ENCODE measurements at regions of chr12 and their contacts with region 1.

Region 1: DNA sequence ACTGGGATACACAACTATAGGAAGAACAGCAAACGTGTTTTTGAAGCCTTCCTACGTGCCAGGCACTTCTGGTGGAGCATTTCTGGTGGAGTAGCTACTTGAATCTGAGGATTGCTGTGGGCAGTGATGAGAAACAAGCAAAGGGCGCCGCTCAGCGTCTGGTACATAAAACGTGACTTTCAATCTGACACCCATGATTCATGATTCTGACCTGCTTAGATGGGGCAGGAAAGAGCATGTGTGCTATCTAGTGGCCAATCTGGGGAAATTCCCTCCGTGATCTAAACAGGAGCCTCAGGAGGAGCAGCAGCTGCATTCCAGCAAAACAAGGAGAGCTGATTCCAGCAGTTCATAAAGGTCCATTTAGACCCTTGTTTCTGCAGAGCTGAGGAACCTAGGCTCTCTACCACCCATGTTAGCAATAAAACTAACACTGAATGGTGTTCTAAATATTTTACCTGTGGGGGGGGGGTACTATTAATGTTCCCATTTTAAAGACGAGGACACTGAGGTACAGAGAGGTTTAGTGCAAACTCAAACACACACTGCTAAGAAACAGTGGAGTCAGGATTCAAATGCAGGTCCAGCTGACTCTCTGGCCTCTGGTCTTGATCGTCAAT is 37.8 kb downstream of the PAH start:
- DNase-seq: peak; percentile 23
- H3K4me3 ChIP-seq: peak overlapping the region in 1 of 2 experiments; percentile 47; a peak in 2 of 4 replicates
- H3K27ac ChIP-seq: no peak overlapping the region
- H3K4me1 ChIP-seq: peaks cover 0 to 2% of the 10 kb centered on the region in 2 experiments; a peak in 1 of 4 replicates
- H3K27me3 ChIP-seq: no peaks in the 10 kb centered on the region
- CTCF ChIP-seq: peak; percentile 62
- EP300 ChIP-seq: no peak
- RAD21 ChIP-seq: peak; percentile 59

Region 2: GRCh38 chr12:102848832-102849231 is 30.4 kb before region 1 on chr12:
- CTCF ChIA-PET with region 1: no interaction called
- POLR2A ChIA-PET with region 1: no interaction called
- DNase-seq: no peak
- H3K4me3 ChIP-seq: no peak overlapping the region
- H3K27ac ChIP-seq: no peak overlapping the region
- H3K4me1 ChIP-seq: no peaks in the 10 kb centered on the region
- H3K27me3 ChIP-seq: no peaks in the 10 kb centered on the region
- CTCF ChIP-seq: no peak
- EP300 ChIP-seq: no peak
- RAD21 ChIP-seq: no peak

Region 3: DNA sequence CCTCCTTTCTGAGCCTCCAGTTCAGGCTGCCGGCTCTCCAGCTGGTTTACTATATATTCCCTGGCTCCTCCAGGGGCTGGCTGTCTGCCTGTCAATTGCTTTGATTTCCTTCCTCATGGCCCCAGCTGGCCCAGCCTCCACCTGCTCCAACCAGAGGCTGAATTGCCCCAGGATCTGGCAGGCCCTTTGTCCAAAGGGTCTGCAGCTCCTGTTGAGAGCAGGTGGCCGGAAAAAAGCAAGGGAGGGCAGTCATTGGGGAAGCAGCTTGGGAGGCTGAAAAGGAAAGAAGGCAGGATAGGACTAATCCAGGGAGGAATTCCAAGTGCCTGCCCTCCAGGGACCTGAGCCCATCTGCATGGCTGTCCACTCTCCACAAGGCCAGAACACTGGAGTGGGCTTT is 12.5 kb after region 1 on chr12:
- CTCF ChIA-PET with region 1: interaction called, 13 read pairs
- POLR2A ChIA-PET with region 1: no interaction called
- DNase-seq: no peak
- H3K4me3 ChIP-seq: no peak overlapping the region
- H3K27ac ChIP-seq: no peak overlapping the region
- H3K4me1 ChIP-seq: no peaks in the 10 kb centered on the region; a peak in 1 of 4 replicates
- H3K27me3 ChIP-seq: no peaks in the 10 kb centered on the region
- CTCF ChIP-seq: no peak
- EP300 ChIP-seq: no peak
- RAD21 ChIP-seq: no peak

Region 4: DNA sequence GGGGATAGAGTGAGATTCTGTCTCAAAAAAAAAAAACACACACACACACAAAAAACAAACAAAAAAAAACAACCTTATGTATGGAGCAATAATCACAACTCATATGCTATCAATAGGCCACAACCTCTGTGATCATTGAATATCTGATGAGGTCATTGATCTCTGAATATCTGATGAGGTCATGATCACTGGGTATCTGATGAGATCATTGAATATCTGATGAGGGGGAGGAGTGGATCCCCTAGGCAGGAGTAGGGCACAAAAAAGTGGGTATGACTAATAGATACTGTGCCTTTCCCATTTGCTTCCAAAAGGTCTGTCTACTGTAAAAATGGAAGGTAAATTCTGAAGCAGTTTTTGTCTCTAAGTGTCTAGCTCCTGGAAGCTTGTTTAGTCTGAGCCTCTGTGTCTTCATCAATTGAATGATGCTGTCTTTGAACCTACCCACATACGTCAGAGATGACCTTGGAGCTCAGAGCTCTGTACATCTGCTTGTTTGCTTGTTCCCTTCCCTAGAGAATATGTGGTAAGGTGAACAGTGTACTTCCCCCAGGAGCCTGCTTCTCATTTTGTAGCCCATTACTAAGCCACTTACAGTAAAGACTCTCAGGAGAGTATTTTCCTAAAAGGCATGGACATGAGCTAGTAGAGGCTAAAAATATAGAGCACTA is 24.2 kb after region 1 on chr12:
- CTCF ChIA-PET with region 1: interaction called, 11 read pairs
- POLR2A ChIA-PET with region 1: no interaction called
- DNase-seq: no peak
- H3K4me3 ChIP-seq: no peak overlapping the region
- H3K27ac ChIP-seq: no peak overlapping the region
- H3K4me1 ChIP-seq: no peaks in the 10 kb centered on the region
- H3K27me3 ChIP-seq: no peaks in the 10 kb centered on the region
- CTCF ChIP-seq: no peak
- EP300 ChIP-seq: no peak
- RAD21 ChIP-seq: no peak

Region 5: DNA sequence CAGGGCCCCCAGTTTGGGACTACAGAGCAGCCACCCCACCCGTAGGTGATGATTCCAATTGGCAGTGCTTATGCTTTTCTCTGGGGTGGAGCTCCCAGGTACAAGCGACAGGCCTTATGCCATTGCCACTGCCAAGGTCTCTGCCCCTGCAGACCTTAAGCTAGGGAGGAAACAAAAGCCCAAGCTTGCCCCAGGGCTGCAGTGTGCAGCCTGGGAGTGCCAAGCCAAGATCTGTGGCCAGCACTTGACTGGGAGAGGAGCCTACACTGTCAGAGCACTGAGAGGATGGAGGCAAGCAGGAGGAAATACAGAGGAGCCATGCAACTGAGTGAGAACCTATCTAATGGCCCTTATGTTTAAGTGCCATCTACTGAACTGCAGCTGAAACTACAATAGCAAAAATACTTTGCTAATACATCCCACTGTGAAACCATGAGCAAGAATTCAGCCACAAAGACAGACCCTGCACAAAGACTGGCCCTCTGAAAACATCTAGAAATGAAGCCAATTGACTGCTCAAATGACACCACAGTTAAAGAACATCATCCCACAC is 60.5 kb after region 1 on chr12:
- CTCF ChIA-PET with region 1: interaction called, 11 read pairs
- POLR2A ChIA-PET with region 1: no interaction called
- DNase-seq: no peak
- H3K4me3 ChIP-seq: no peak overlapping the region
- H3K27ac ChIP-seq: no peak overlapping the region
- H3K4me1 ChIP-seq: no peaks in the 10 kb centered on the region
- H3K27me3 ChIP-seq: no peaks in the 10 kb centered on the region
- CTCF ChIP-seq: no peak
- EP300 ChIP-seq: no peak
- RAD21 ChIP-seq: 0 out of 2 replicates have a peak, but pooled peaks have one; percentile 4

Measured in SK-N-SH (cell line).